ENCODE measurements at regions of chr11 and their contacts with region 1.

Region 1: GRCh38 chr11:121591405-121592033 is 138.8 kb upstream of the SORL1-AS1 start:
- DNase-seq: no peak
- ATAC-seq: peak; percentile 39
- H3K4me3 Mint-ChIP-seq: peak overlapping the region; percentile 49
- H3K27ac Mint-ChIP-seq: peak overlapping the region; percentile 93
- H3K4me1 Mint-ChIP-seq: peaks cover 36% of the 10 kb centered on the region
- H3K27me3 Mint-ChIP-seq: no peaks in the 10 kb centered on the region
- CTCF ChIP-seq: peak; percentile 77

Region 2: GRCh38 chr11:120335908-120336640 is 1255.4 kb before region 1 on chr11 and contains the start of gene ARHGEF12:
- CTCF ChIA-PET with region 1: no interaction called
- POLR2A ChIA-PET with region 1: no interaction called
- intact Hi-C with region 1: loop called (anchors 5 kb)
- DNase-seq: peak; percentile 81
- ATAC-seq: peak; percentile 68
- H3K4me3 Mint-ChIP-seq: peak within 1 kb of the TSS; percentile 91
- H3K27ac Mint-ChIP-seq: peak within 1 kb of the TSS; percentile 74
- H3K4me1 Mint-ChIP-seq: peaks cover 31% of the 10 kb centered on the region
- H3K27me3 Mint-ChIP-seq: peaks cover 35% of the 10 kb centered on the region
- CTCF ChIP-seq: no peak
- total RNA-seq, gene ARHGEF12: 20.9 and 25.8 TPM in 2 replicates

Region 3: DNA sequence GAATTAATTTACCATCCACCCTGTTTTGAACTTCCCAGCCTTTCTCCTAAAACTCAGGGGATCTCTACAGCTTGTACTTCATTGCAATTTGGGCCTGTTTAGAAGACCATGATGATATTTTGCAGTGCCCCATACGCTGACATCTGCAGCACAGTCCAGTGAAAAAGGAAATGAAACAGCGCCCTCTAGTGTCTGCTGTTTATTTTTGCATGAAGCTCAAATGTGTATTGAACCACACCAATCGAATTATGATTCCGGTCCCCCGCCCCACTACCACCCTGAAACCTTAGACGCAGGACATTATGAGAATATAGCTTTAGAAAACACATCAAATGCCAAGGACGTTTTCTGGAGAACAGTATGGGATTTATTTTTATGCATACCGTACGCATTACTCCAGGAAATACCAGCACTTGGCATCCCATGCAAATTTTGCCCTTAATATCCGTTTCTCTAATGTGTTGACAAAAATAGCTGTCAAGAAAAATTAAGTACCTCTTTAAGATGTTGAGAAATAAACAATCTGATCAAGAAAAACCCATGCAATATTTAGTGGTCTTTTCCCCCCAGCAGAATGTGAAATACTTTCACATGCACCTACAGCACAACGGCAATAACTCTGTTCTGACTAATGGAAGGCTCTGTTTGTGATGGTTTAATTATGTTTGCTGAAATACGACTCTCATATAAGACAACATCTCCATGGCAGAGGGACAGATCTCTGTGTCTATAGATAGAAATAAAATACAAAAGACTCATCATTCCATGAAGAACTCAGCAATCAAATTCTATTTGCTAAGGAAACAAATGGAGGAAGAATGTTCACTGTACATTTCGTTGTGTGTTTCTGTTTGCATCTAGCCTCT is 396.6 kb before region 1 on chr11:
- CTCF ChIA-PET with region 1: interaction called, 5 read pairs
- POLR2A ChIA-PET with region 1: no interaction called
- intact Hi-C with region 1: loop called (anchors 1 kb)
- DNase-seq: no peak
- ATAC-seq: peak; percentile 52
- H3K4me3 Mint-ChIP-seq: no peak overlapping the region
- H3K27ac Mint-ChIP-seq: no peak overlapping the region
- H3K4me1 Mint-ChIP-seq: peaks cover 6% of the 10 kb centered on the region
- H3K27me3 Mint-ChIP-seq: peaks cover 25% of the 10 kb centered on the region
- CTCF ChIP-seq: no peak

Region 4: GRCh38 chr11:121318848-121319834 is 272.4 kb before region 1 on chr11:
- CTCF ChIA-PET with region 1: interaction called, 71 read pairs
- POLR2A ChIA-PET with region 1: interaction called, 12 read pairs
- intact Hi-C with region 1: loop called (anchors 1 kb)
- DNase-seq: no peak
- ATAC-seq: peak; percentile 87
- H3K4me3 Mint-ChIP-seq: no peak overlapping the region
- H3K27ac Mint-ChIP-seq: no peak overlapping the region
- H3K4me1 Mint-ChIP-seq: peaks cover 17% of the 10 kb centered on the region
- H3K27me3 Mint-ChIP-seq: peaks cover 2% of the 10 kb centered on the region
- CTCF ChIP-seq: peak; percentile 61

Region 5: GRCh38 chr11:121426476-121427399 is 164.8 kb before region 1 on chr11:
- CTCF ChIA-PET with region 1: interaction called, 8 read pairs
- POLR2A ChIA-PET with region 1: interaction called, 9 read pairs
- intact Hi-C with region 1: loop called (anchors 1 kb)
- DNase-seq: peak; percentile 58
- ATAC-seq: peak; percentile 43
- H3K4me3 Mint-ChIP-seq: peak overlapping the region; percentile 70
- H3K27ac Mint-ChIP-seq: peak overlapping the region; percentile 64
- H3K4me1 Mint-ChIP-seq: peaks cover 88% of the 10 kb centered on the region
- H3K27me3 Mint-ChIP-seq: peaks cover 2% of the 10 kb centered on the region
- CTCF ChIP-seq: no peak

Region 6: DNA sequence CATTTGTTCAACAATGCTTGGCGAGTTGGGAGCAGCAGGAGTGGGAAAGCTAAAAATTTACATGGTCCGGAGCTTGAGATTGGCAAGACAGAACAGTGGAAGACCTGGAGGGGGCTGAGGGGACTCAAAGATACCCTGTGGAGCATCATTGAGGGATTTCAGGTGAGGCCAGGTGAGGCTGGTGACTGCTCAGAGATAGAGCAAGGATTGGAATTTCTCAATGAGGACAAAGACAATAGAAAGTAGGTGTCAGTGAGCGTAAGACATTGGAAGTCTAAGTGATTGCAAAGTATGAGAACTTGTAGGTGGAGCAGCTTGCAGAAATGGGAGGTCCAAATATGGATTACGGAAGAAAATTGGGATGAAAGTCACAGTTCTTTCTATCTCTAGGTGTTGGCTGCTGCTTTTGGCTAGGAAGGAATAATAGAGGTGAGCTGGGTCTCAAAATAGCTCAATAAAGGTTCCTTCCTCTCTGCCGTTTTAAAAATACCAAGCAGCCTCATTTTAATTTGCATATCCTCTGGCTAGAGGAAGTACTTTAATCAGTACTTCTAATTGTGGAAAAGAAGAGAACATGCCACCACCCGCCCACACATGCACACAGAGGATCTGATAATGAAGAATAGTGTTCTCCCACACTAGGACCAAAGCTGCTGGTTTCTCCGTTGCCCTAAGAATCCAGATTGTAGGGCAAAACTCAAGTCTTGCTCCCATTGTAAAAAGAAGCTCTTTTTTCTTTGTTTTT is 97.0 kb before region 1 on chr11:
- CTCF ChIA-PET with region 1: interaction called, 6 read pairs
- POLR2A ChIA-PET with region 1: no interaction called
- intact Hi-C with region 1: loop called (anchors 2 kb)
- DNase-seq: no peak
- ATAC-seq: peak; percentile 80
- H3K4me3 Mint-ChIP-seq: peak overlapping the region; percentile 69
- H3K27ac Mint-ChIP-seq: peak overlapping the region; percentile 74
- H3K4me1 Mint-ChIP-seq: peaks cover 71% of the 10 kb centered on the region
- H3K27me3 Mint-ChIP-seq: no peaks in the 10 kb centered on the region
- CTCF ChIP-seq: no peak

Region 7: GRCh38 chr11:121575250-121575962 is 16.1 kb before region 1 on chr11:
- CTCF ChIA-PET with region 1: interaction called, 27 read pairs
- POLR2A ChIA-PET with region 1: interaction called, 15 read pairs
- intact Hi-C with region 1: loop called (anchors 1 kb)
- DNase-seq: no peak
- ATAC-seq: peak; percentile 78
- H3K4me3 Mint-ChIP-seq: peak overlapping the region; percentile 50
- H3K27ac Mint-ChIP-seq: peak overlapping the region; percentile 87
- H3K4me1 Mint-ChIP-seq: peaks cover 42% of the 10 kb centered on the region
- H3K27me3 Mint-ChIP-seq: peaks cover 4% of the 10 kb centered on the region
- CTCF ChIP-seq: no peak